PC-3 (cell line): ENCODE measurements at regions of chr21 and their contacts with region 1.

Region 1: DNA sequence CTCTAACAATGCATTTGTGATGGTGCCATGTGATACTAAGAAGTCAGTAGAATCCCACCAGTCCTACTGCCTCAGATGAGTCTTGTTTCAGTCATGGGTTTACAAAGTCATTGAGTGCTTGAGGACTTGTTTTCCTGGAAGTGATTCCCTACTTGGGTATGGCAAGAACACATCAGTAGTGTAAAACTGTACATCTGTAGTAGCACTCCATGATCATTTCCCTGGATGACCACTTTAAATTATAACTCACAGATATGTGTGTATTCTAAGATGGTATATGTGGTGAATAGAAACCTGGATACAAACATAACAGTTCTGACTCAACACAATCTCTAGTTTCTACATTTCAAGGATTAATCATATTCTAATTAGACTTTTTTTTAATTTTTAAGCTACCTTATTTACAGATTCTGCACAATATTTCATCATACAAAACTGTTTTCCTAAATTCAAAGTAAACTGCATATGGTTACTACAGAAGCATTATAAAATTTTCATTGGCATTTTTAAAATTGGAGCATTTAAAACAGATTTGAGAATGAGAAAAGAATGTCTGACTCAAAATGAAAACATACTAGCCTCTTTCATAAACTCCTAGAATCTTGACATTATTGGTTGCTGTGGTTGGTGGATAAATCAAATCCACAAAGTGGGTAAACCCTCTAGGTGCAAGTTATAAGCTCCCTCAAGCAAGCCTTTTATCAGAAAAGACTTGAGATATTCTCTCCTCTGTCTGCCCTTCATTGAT is 6.8 kb upstream of the PSMG1 start:
- DNase-seq: no peak
- ATAC-seq: peak; percentile 50
- H3K4me3 ChIP-seq: no peak overlapping the region
- H3K27ac ChIP-seq: no peak overlapping the region
- H3K4me1 ChIP-seq: peaks cover 6% of the 10 kb centered on the region; the same call in 1 of the 2 replicates
- H3K27me3 ChIP-seq: no peaks in the 10 kb centered on the region
- CTCF ChIP-seq: no peak

Region 2: DNA sequence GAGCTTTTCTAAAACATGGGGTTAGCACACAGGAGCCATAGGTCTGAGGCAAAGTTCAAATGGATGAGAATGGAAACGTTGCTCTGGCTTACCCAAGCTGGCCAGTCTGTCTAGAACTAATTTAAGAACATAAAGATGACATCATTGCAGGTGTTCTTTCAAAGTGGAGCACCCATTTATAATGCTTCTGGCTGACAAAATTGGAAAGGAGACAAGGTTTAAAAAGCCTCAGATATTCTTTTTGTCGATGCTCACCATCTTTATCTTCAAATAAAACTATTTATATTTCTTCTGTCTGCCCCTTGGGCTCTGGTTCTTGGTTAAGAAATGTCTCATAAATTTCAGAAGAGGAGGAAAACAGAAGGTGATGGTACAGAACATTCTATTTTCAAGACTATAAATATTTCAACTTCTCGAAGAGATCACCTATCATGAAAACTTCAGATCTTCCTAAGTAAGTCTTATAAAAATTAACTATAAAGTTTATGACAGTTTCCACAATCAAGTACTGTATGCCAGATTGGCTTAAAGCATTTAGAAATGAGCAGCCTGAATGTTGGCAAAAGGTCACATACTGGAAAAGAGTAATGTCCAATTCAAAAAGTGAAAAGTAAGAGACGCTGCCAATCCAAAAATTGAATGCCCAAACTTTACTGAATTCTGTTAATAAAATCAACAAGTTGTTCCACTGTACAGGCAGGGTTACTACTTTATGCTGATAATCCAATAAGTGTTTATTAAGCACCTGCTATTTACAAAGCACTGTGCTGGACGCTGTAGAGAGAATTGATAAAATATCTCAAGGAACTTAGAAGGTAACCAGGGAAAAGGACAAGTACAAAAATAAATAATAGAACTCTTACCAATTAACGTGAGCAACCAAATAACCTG is 292.3 kb before region 1 on chr21:
- CTCF ChIA-PET with region 1: no interaction called
- POLR2A ChIA-PET with region 1: no interaction called
- intact Hi-C with region 1: no loop called
- DNase-seq: no peak
- ATAC-seq: peak; percentile 10; the same call in 1 of the 2 replicates
- H3K4me3 ChIP-seq: no peak overlapping the region
- H3K27ac ChIP-seq: no peak overlapping the region
- H3K4me1 ChIP-seq: peaks cover 23% of the 10 kb centered on the region
- H3K27me3 ChIP-seq: no peaks in the 10 kb centered on the region
- CTCF ChIP-seq: no peak

Region 3: DNA sequence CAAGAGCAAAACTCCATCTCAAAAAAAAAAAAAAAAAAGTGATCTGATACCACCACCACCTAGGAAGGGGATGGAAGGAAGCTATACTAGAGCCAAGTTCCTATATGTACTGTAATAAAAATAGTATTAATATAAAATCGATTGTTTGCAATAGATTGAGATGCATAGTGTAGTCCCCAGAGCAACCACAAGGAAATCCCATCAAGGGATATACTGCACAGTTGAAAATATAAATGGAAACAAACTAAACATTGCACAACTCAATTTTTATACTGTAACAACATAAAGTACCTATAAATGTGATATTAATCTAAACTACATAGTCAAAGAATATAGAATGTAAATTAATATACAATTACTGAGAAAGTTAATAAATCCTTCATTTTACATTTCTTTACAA is 14.1 kb after region 1 on chr21:
- CTCF ChIA-PET with region 1: no interaction called
- POLR2A ChIA-PET with region 1: no interaction called
- intact Hi-C with region 1: no loop called
- DNase-seq: no peak
- ATAC-seq: peak; percentile 46
- H3K4me3 ChIP-seq: no peak overlapping the region
- H3K27ac ChIP-seq: no peak overlapping the region
- H3K4me1 ChIP-seq: no peaks in the 10 kb centered on the region
- H3K27me3 ChIP-seq: no peaks in the 10 kb centered on the region
- CTCF ChIP-seq: no peak

Region 4: DNA sequence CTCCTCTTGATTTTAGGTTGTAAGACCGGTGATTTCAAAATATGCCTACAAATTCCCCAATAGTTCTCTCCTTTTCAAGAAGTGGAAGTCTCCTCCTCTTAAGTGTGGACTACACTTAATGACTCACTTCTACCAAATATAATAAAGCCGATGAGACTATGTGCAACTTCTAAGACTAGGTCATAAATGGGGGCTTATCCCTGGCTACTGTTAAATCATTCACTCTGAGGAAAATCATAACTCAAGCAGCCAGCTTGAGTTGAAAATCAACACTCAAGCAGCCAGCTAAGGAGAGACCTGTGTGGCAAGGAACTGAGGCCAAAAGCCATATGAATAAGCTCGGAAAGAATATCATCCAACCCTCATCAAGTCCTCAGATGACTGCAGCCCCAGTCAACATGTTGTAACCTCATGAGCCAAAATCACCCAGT is 42.8 kb after region 1 on chr21:
- CTCF ChIA-PET with region 1: no interaction called
- POLR2A ChIA-PET with region 1: no interaction called
- intact Hi-C with region 1: loop called (anchors 5 kb)
- DNase-seq: no peak
- ATAC-seq: peak; percentile 37
- H3K4me3 ChIP-seq: no peak overlapping the region
- H3K27ac ChIP-seq: no peak overlapping the region
- H3K4me1 ChIP-seq: no peaks in the 10 kb centered on the region
- H3K27me3 ChIP-seq: no peaks in the 10 kb centered on the region
- CTCF ChIP-seq: no peak